ENCODE measurements at regions of chr11 and their contacts with region 1.

Region 1: GRCh38 chr11:59078435-59078834 is 7.7 kb upstream of the GLYATL1B start:
- DNase-seq: no peak
- ATAC-seq: no peak
- H3K4me3 ChIP-seq: no peak overlapping the region
- H3K27ac ChIP-seq: no peak overlapping the region
- H3K4me1 ChIP-seq: no peaks in the 10 kb centered on the region
- H3K27me3 ChIP-seq: no peaks in the 10 kb centered on the region
- CTCF ChIP-seq: no peak

Region 2: DNA sequence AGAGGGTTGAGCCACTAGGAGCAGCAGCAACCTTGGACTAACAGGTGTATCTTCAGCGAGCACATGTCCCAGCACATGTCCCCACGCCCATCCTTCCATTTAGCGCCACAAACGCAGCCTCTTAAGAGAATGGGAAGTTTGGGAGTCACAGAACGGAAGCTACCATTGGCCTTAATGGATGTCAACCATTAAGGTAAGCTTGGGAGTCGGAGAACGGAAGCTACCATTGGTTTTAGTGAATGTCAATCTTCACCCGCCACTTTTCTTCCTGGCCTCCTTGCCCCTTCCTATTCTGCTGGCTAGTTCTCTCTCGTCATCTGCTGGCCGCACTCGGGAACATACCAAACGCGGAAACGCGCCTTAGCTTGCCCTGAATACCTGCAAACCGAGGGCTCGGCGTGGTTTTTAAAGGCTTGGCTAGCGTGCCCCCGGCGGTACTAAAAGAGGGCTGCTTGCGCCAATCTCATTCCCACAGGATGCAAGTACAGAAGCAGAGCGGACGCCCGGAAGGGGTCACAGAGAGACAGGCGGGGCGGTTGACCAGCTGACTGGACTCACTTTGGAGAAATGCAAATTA is 114.8 kb before region 1 on chr11:
- intact Hi-C with region 1: no loop called
- DNase-seq: no peak
- ATAC-seq: no peak
- H3K4me3 ChIP-seq: no peak overlapping the region
- H3K27ac ChIP-seq: no peak overlapping the region
- H3K4me1 ChIP-seq: no peaks in the 10 kb centered on the region
- H3K27me3 ChIP-seq: peaks cover 0 to 14% (median 3%) of the 10 kb centered on the region in 3 donors
- CTCF ChIP-seq: no peak

Region 3: GRCh38 chr11:59040607-59041006 is 37.8 kb before region 1 on chr11:
- intact Hi-C with region 1: loop called in 1 of 2 experiments (anchors 2 kb)
- DNase-seq: no peak
- ATAC-seq: no peak
- H3K4me3 ChIP-seq: no peak overlapping the region
- H3K27ac ChIP-seq: no peak overlapping the region
- H3K4me1 ChIP-seq: no peaks in the 10 kb centered on the region
- H3K27me3 ChIP-seq: no peaks in the 10 kb centered on the region
- CTCF ChIP-seq: no peak